ENCODE measurements at regions of chr18 and their contacts with region 1.

Region 1: DNA sequence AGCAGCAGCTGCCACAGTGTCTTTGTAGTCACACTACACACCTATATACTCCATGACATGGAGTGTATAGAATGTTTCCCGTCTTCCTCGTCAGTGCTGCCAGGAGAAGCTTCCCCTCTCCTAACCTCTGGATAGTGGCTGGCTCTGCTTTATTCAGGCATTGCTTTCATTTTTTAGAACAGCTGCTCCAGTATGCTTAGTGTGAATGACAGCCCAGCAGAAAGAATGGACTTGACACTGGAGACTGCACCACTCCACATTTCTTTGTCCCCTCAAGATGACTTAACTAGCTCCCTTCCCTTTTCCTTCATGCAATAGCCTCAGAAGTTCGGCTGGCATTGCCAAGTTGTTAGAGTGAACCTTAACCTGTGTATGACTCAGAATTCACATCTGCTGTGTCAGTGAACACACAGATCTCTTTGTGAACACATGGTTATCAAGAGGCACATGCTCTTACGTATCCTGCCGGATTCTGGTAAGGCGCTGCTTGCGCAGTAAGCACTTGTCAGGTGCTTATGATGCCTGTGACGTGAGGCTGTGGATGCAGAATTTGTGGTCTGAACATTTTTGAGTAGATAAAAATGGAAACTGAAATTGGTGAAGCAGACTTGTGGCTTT is 73.9 kb downstream of the NEDD4L start:
- DNase-seq: no peak
- H3K4me3 ChIP-seq: no peak overlapping the region
- H3K27ac ChIP-seq: no peak overlapping the region
- H3K4me1 ChIP-seq: peaks cover 0 to 15% of the 10 kb centered on the region in 2 experiments; a peak in 2 of 4 replicates
- H3K27me3 ChIP-seq: no peaks in the 10 kb centered on the region
- CTCF ChIP-seq: no peak
- EP300 ChIP-seq: no peak
- RAD21 ChIP-seq: no peak

Region 2: GRCh38 chr18:57881818-57882413 is 236.0 kb before region 1 on chr18:
- CTCF ChIA-PET with region 1: interaction called, 52 read pairs
- POLR2A ChIA-PET with region 1: interaction called, 3 read pairs
- DNase-seq: peak; percentile 57
- H3K4me3 ChIP-seq: peak overlapping the region in 1 of 2 experiments; percentile 33; a peak in 1 of 4 replicates
- H3K27ac ChIP-seq: no peak overlapping the region
- H3K4me1 ChIP-seq: no peaks in the 10 kb centered on the region; a peak in 1 of 4 replicates
- H3K27me3 ChIP-seq: no peaks in the 10 kb centered on the region
- CTCF ChIP-seq: peak; percentile 94
- EP300 ChIP-seq: no peak
- RAD21 ChIP-seq: peak; percentile 98

Region 3: DNA sequence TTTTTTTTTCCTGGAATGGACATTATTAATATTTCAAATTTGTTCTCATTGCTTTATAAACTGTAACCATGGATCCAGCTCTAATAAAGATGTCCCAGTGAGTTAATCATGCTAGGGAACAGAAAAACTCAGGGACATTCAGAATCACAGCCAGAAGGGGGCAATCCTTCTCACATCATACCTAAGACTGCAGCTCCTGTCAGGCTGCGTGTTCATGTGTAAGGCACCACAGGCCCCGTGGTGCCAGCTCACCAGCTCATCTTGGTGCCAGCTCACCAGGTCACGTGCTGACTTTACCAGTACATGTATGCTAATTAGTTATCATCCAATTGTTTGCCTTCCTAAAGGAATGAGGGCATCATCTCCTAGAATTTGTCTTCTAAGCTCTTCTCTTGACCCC is 158.6 kb before region 1 on chr18:
- CTCF ChIA-PET with region 1: interaction called, 28 read pairs
- POLR2A ChIA-PET with region 1: no interaction called
- DNase-seq: peak; percentile 49
- H3K4me3 ChIP-seq: peak overlapping the region in 1 of 2 experiments; percentile 35; a peak in 1 of 4 replicates
- H3K27ac ChIP-seq: no peak overlapping the region
- H3K4me1 ChIP-seq: peaks cover 0 to 7% of the 10 kb centered on the region in 2 experiments; a peak in 2 of 4 replicates
- H3K27me3 ChIP-seq: no peaks in the 10 kb centered on the region; the same call in 1 of the 2 replicates
- CTCF ChIP-seq: peak; percentile 52
- EP300 ChIP-seq: no peak
- RAD21 ChIP-seq: peak; percentile 56

Region 4: GRCh38 chr18:57995331-57995730 is 122.6 kb before region 1 on chr18:
- CTCF ChIA-PET with region 1: no interaction called
- POLR2A ChIA-PET with region 1: no interaction called
- DNase-seq: no peak
- H3K4me3 ChIP-seq: no peak overlapping the region
- H3K27ac ChIP-seq: no peak overlapping the region
- H3K4me1 ChIP-seq: no peaks in the 10 kb centered on the region
- H3K27me3 ChIP-seq: no peaks in the 10 kb centered on the region
- CTCF ChIP-seq: no peak
- EP300 ChIP-seq: no peak
- RAD21 ChIP-seq: no peak

Region 5: GRCh38 chr18:58043491-58044379 is 74.2 kb before region 1 on chr18 and contains the start of gene NEDD4L:
- CTCF ChIA-PET with region 1: interaction called, 99 read pairs
- POLR2A ChIA-PET with region 1: no interaction called
- DNase-seq: peak; percentile 92
- H3K4me3 ChIP-seq: peak within 1 kb of the TSS; percentile 90 to 92
- H3K27ac ChIP-seq: peak within 1 kb of the TSS; percentile 84 to 86
- H3K4me1 ChIP-seq: peaks cover 0 to 10% of the 10 kb centered on the region in 2 experiments; a peak in 2 of 4 replicates
- H3K27me3 ChIP-seq: no peaks in the 10 kb centered on the region
- CTCF ChIP-seq: peak; percentile 77
- EP300 ChIP-seq: no peak
- RAD21 ChIP-seq: peak; percentile 86
- polyA plus RNA-seq, gene NEDD4L: 11.0 and 13.2 TPM in 2 replicates

Region 6: GRCh38 chr18:58064406-58064998 is 53.4 kb before region 1 on chr18:
- CTCF ChIA-PET with region 1: interaction called, 22 read pairs
- POLR2A ChIA-PET with region 1: no interaction called
- DNase-seq: no peak
- H3K4me3 ChIP-seq: no peak overlapping the region
- H3K27ac ChIP-seq: no peak overlapping the region
- H3K4me1 ChIP-seq: no peaks in the 10 kb centered on the region
- H3K27me3 ChIP-seq: no peaks in the 10 kb centered on the region
- CTCF ChIP-seq: no peak
- EP300 ChIP-seq: no peak
- RAD21 ChIP-seq: no peak

Region 7: DNA sequence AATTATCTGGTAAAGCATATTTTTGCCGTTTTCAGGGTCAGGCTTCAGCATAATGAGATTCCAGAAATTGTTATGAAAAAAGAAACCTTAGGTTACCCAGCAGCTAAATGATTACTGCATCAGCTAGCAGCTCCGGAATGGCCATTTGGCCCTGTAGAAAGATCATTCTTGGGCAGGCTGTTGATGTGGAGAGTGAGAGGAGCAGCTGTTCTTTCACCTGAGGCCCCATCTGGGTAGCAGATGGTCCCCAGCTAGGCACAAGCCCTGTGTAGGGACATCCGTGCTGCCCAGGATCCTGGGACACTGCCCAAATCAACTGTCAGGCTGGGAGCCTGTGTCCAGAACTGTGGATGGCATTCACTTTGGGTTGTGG is 12.0 kb before region 1 on chr18:
- CTCF ChIA-PET with region 1: interaction called, 36 read pairs
- POLR2A ChIA-PET with region 1: no interaction called
- DNase-seq: peak; percentile 52
- H3K4me3 ChIP-seq: no peak overlapping the region
- H3K27ac ChIP-seq: no peak overlapping the region
- H3K4me1 ChIP-seq: peaks cover 0 to 15% of the 10 kb centered on the region in 2 experiments; a peak in 2 of 4 replicates
- H3K27me3 ChIP-seq: no peaks in the 10 kb centered on the region
- CTCF ChIP-seq: no peak
- EP300 ChIP-seq: no peak
- RAD21 ChIP-seq: no peak

Region 8: GRCh38 chr18:58143386-58143785 is 25.5 kb after region 1 on chr18:
- CTCF ChIA-PET with region 1: interaction called, 12 read pairs
- POLR2A ChIA-PET with region 1: no interaction called
- DNase-seq: peak; percentile 71
- H3K4me3 ChIP-seq: no peak overlapping the region
- H3K27ac ChIP-seq: no peak overlapping the region; a peak in 1 of 4 replicates
- H3K4me1 ChIP-seq: peaks cover 0 to 11% of the 10 kb centered on the region in 2 experiments; a peak in 2 of 4 replicates
- H3K27me3 ChIP-seq: no peaks in the 10 kb centered on the region
- CTCF ChIP-seq: no peak
- EP300 ChIP-seq: peak in 1 of 2 experiments; percentile 37; a peak in 1 of 4 replicates
- RAD21 ChIP-seq: no peak

Measured in SK-N-SH (cell line).